PC-3 (cell line): ENCODE measurements at regions of chr16 and their contacts with region 1.

Region 1: DNA sequence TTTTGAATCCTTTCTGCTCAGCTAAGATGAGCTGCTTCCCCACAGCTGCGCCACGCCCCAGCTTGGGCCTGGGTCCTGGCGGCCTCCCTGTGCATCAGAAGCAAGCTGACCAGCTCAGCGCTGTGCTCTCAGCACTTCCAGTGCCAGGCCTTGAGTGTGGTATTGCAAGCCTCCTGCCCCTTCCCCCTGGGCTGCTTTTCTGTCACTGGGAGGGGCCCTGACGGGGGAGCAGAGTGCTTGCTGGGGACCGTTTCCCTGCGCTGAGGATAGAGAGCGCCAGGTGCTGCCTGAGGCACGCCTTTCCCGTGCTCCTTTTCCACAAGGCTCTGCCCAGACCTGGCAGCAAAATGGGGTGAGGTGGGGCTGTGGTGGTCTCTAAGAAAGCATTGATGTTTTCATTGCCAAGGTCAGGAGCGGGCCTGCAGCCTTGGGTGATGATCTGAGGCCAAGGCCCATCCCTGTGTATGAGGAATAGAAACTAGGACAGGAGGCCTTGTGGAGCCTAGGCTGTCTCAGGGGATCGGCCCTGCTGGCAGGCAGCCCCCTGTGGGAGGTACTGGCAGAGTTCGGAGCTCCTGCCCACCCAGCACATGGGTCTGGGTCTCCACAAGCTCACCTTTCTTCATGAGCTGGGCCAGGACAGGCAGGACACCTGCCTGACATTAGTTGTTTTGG is 29.7 kb downstream of the POLR3E start:
- DNase-seq: no peak
- ATAC-seq: no peak
- H3K4me3 ChIP-seq: no peak overlapping the region
- H3K27ac ChIP-seq: no peak overlapping the region
- H3K4me1 ChIP-seq: no peaks in the 10 kb centered on the region
- H3K27me3 ChIP-seq: no peaks in the 10 kb centered on the region
- CTCF ChIP-seq: no peak

Region 2: GRCh38 chr16:22297114-22297878 is 29.6 kb before region 1 on chr16 and contains the start of gene POLR3E:
- CTCF ChIA-PET with region 1: interaction called, 11 read pairs
- POLR2A ChIA-PET with region 1: no interaction called
- intact Hi-C with region 1: no loop called
- DNase-seq: peak; percentile 95
- ATAC-seq: peak; percentile 85
- H3K4me3 ChIP-seq: peak within 1 kb of the TSS; percentile 91
- H3K27ac ChIP-seq: peak within 1 kb of the TSS; percentile 95
- H3K4me1 ChIP-seq: no peaks in the 10 kb centered on the region
- H3K27me3 ChIP-seq: no peaks in the 10 kb centered on the region
- CTCF ChIP-seq: peak; percentile 67
- total RNA-seq, gene POLR3E: 48.8 and 57.1 TPM in 2 replicates

Region 3: GRCh38 chr16:22307838-22308237 is 19.1 kb before region 1 on chr16:
- CTCF ChIA-PET with region 1: no interaction called
- POLR2A ChIA-PET with region 1: no interaction called
- intact Hi-C with region 1: no loop called
- DNase-seq: no peak
- ATAC-seq: no peak
- H3K4me3 ChIP-seq: no peak overlapping the region
- H3K27ac ChIP-seq: no peak overlapping the region
- H3K4me1 ChIP-seq: no peaks in the 10 kb centered on the region
- H3K27me3 ChIP-seq: no peaks in the 10 kb centered on the region
- CTCF ChIP-seq: no peak